Left colon (tissue), 2 donors: ENCODE measurements at regions of chr22 and their contacts with region 1.

Region 1: GRCh38 chr22:34334893-34335292 is 414.6 kb upstream of the LARGE1 start:
- DNase-seq: no peak
- ATAC-seq: no peak

Region 2: GRCh38 chr22:32932176-32932575 is 1402.7 kb before region 1 on chr22:
- intact Hi-C with region 1: loop called in 1 of 2 experiments (anchors 10 kb)
- DNase-seq: no peak
- ATAC-seq: no peak